Naive thymus-derived CD4-positive, alpha-beta T cell (primary cell): ENCODE measurements at regions of chr3 and their contacts with region 1.

Region 1: DNA sequence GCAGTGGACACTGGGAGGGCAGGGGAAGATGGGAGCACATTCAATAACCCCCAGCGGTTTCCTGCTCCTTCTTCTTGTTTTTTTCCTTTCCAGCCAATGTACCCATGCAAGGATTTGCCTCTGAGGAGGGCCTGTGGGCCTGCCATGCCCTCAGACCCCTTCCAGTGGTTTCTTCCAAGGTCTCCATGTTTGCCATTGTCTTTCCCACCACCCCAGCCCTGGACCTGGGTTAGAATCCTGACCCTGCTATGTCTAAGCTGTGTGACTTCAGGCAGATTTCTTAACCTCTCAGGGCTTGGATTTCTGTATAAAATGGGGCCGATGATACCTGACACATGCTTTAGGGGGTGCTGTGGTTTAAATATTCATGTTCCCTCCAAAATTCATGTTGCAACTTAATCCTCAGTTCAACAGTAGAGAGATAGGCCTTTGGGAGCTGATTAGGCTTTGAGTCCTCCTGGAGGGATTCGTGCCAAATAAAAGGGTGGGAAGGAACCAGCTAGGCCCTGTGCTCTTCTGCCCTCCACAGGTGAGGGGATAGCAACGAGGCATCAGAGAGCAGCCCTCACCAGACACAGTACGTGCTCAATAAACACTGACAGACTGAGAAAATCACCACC is 46.3 kb upstream of the FLNB start:
- DNase-seq: peak in 4 of 9 donors; percentile 8 to 21 (median 18)
- ATAC-seq: no peak
- H3K4me3 ChIP-seq: no peak overlapping the region
- H3K4me3 Mint-ChIP-seq: no peak overlapping the region
- H3K27ac ChIP-seq: no peak overlapping the region
- H3K27ac Mint-ChIP-seq: no peak overlapping the region
- H3K4me1 ChIP-seq: peaks cover 0 to 2% of the 10 kb centered on the region in 2 donors
- H3K4me1 Mint-ChIP-seq: peaks cover 3 to 13% (median 8%) of the 10 kb centered on the region in 7 donors
- H3K27me3 ChIP-seq: no peaks in the 10 kb centered on the region
- H3K27me3 Mint-ChIP-seq: peaks cover 0 to 1% (median 0%) of the 10 kb centered on the region in 5 donors

Region 2: DNA sequence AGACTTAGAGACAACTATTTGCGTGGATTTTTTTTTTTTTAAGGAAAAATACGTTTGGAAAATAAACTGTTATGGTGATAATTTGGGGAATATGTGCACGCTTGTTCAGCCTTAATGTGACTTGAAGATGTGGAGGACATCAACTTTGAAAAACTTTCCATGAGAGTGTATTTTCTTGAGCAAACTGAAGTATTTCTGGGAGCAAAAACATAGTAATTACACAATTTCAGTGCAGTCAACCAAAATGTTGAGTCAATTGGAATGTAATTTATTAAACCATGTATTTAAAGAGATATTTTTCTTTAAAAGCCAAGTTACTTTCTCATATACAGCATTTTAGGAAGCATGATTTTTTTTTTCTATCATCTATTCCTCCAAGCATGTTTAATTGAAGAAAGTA is 34.0 kb before region 1 on chr3:
- CTCF ChIA-PET with region 1: no interaction called
- POLR2A ChIA-PET with region 1: no interaction called
- intact Hi-C with region 1: no loop called
- DNase-seq: no peak
- ATAC-seq: no peak
- H3K4me3 ChIP-seq: no peak overlapping the region
- H3K4me3 Mint-ChIP-seq: no peak overlapping the region
- H3K27ac ChIP-seq: no peak overlapping the region
- H3K27ac Mint-ChIP-seq: no peak overlapping the region
- H3K4me1 ChIP-seq: no peaks in the 10 kb centered on the region
- H3K4me1 Mint-ChIP-seq: no peaks in the 10 kb centered on the region
- H3K27me3 ChIP-seq: no peaks in the 10 kb centered on the region
- H3K27me3 Mint-ChIP-seq: no peaks in the 10 kb centered on the region

Region 3: DNA sequence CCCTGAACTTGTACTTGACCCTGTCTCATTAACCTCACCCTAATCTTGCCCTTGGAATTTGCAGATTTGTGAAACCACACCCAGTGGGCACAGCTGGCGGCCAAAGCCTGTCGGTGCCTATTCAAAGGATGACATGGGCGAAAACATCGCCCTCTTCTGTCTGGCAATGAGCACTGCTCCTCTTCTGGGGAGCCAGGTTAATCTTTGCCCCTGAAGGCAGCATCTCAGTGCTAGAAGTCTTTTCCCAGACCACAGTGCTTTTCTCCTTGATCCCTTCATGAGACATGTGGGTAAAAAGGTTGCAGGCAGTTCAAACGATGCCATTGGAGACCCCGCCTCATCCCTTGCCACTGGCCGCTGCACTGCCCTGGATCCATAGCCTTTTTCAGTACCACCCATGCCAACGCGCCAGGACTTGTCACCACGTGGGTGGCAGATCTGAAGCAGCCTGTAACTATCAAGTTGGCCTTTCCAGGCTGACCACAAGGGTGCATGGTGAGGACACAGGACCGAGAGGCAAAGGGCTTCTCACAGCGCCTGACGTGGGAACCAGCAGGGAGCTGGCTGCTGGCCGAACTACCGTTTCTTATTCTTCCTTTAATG is 255.4 kb after region 1 on chr3:
- CTCF ChIA-PET with region 1: no interaction called
- POLR2A ChIA-PET with region 1: no interaction called
- intact Hi-C with region 1: loop called in 1 of 2 experiments (anchors 1 kb)
- DNase-seq: peak; percentile 21 to 64 (median 52)
- ATAC-seq: peak; percentile 86
- H3K4me3 ChIP-seq: no peak overlapping the region
- H3K4me3 Mint-ChIP-seq: peak overlapping the region in 4 of 10 donors; percentile 12 to 45 (median 26)
- H3K27ac ChIP-seq: no peak overlapping the region
- H3K27ac Mint-ChIP-seq: no peak overlapping the region
- H3K4me1 ChIP-seq: peaks cover 0 to 3% of the 10 kb centered on the region in 2 donors
- H3K4me1 Mint-ChIP-seq: peaks cover 0 to 17% (median 7%) of the 10 kb centered on the region in 7 donors
- H3K27me3 ChIP-seq: no peaks in the 10 kb centered on the region
- H3K27me3 Mint-ChIP-seq: peaks cover 3 to 10% (median 4%) of the 10 kb centered on the region in 5 donors